Right ventricle myocardium superior (tissue), 1 donor: ENCODE measurements at regions of chr19 and their contacts with region 1.

Region 1: GRCh38 chr19:57279418-57280066 is 743 bp upstream of the ZNF460 start:
- DNase-seq: peak; percentile 93
- ATAC-seq: peak; percentile 97

Region 2: DNA sequence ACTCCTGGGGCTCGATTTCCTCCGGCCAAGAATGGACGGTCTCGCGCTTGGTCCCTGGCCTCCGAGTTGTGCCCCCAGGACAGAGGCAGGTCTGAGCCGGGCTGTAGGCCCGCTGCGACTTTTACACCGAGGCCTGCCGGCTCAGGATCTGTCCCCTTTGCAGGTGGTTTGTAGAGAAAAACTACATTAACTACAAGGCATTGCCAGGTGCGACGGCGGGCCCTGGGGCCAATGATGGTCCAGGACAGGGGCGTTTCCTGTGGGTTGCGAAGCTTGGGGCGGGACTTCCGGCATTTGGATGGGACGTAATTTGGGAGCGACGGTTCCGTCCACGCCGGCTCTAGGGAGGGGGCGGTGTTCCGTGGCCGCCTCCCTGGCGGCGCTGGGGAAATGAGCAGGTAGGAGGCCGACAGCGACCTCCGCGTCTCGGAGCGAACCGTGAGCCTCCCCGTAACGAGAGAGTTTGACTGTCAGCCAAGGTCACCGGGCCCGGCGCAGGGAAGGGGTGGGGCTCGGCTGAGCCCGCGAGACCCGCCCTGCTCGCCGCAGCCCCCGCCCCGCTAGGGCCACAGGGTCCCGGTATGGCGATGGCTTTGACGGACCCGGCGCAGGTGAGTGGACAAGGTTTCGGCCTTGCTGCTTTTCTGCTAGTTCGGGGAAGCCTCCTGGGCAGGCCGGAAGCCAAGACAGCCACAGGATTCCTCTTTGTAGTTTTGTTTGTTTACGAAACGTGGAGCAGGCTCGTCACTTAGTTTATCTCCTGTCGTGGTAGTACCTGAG is 39.0 kb before region 1 on chr19 and contains the start of gene ZNF805:
- intact Hi-C with region 1: loop called (anchors 2 kb)
- DNase-seq: peak; percentile 98
- ATAC-seq: peak; percentile 99
- total RNA-seq, gene ZNF805: 8.4 TPM

Region 3: DNA sequence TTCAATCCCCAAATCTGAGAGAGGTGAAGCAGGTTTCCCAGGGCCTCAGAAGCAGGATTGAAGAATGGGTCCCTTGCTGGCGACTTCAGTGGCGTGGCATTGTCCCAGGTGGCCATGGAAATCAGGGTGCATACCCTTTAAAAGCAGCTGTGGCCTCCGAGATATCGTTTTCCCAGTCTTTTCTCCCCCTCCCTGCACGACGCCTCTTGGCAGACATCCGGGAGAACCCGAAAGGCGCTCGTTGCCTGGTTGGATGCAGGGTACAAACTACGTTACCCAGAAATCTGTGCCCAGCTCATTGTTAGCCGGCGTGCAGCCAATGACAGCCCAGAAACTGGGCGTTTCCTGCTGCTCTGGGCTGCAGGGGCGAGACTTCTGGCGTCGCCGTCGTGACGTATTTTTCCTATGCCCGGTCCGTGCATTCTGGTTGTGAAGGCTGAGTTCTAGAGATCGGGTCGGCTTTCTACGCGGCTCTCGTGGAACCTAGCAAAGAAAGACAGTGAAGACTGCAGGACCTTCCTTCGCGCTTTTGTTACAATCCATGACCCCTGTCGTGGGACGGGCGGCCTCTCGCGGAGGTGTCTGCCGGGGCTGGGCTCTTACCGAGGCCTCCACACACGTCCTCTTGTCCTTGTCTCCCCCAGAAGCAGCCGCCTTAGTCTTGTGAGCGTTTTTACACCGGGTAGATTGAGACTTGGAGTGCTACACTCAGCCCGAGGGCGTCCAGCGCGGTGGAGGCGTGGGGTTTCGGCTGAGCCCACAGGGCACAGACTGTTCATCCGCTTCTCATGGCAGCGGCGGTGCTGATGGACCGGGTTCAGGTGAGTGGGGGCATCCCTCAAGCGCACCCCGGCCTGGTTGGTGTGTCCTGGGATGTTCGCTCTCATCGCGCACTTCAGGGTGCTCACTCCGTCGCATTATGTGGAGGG is 71.6 kb after region 1 on chr19 and contains the start of gene ZNF304:
- intact Hi-C with region 1: loop called (anchors 5 kb)
- DNase-seq: peak; percentile 97
- ATAC-seq: peak; percentile 99
- total RNA-seq, gene ZNF304: 7.5 TPM

Region 4: DNA sequence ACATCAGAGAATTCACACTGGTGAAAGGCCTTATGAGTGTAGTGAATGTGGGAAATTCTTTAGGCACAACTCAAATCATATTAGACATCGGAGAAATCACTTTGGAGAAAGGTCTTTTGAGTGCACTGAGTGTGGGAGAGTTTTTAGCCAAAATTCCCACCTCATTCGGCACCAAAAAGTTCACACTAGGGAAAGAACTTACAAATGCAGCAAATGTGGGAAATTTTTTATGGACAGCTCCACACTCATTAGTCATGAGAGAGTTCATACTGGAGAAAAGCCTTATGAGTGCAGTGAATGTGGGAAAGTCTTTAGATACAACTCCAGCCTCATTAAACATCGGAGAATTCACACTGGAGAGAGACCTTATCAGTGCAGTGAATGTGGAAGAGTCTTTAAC is 141.5 kb after region 1 on chr19:
- intact Hi-C with region 1: no loop called
- DNase-seq: no peak
- ATAC-seq: no peak